ENCODE measurements at regions of chr19 and their contacts with region 1.

Region 1: GRCh38 chr19:45643024-45643926 is 4.1 kb upstream of the EML2 start:
- DNase-seq: peak; percentile 97
- ATAC-seq: peak; percentile 41
- H3K4me3 Mint-ChIP-seq: peak overlapping the region; percentile 92
- H3K27ac Mint-ChIP-seq: peak overlapping the region; percentile 99
- H3K4me1 Mint-ChIP-seq: peaks cover 49% of the 10 kb centered on the region
- H3K27me3 Mint-ChIP-seq: peaks cover 3% of the 10 kb centered on the region
- CTCF ChIP-seq: peak; percentile 99

Region 2: GRCh38 chr19:45485305-45486077 is 157.8 kb before region 1 on chr19:
- CTCF ChIA-PET with region 1: interaction called, 19 read pairs
- POLR2A ChIA-PET with region 1: no interaction called
- intact Hi-C with region 1: no loop called
- DNase-seq: peak; percentile 100
- ATAC-seq: peak; percentile 99
- H3K4me3 Mint-ChIP-seq: peak overlapping the region; percentile 86
- H3K27ac Mint-ChIP-seq: peak overlapping the region; percentile 85
- H3K4me1 Mint-ChIP-seq: peaks cover 14% of the 10 kb centered on the region
- H3K27me3 Mint-ChIP-seq: peaks cover 2% of the 10 kb centered on the region
- CTCF ChIP-seq: peak; percentile 92

Region 3: GRCh38 chr19:45584332-45585157 is 58.7 kb before region 1 on chr19 and contains the start of gene OPA3:
- CTCF ChIA-PET with region 1: interaction called, 3 read pairs
- POLR2A ChIA-PET with region 1: interaction called, 21 read pairs
- intact Hi-C with region 1: no loop called
- DNase-seq: peak; percentile 100
- ATAC-seq: peak; percentile 93
- H3K4me3 Mint-ChIP-seq: peak within 1 kb of the TSS; percentile 91
- H3K27ac Mint-ChIP-seq: peak within 1 kb of the TSS; percentile 99
- H3K4me1 Mint-ChIP-seq: peaks cover 17% of the 10 kb centered on the region
- H3K27me3 Mint-ChIP-seq: peaks cover 8% of the 10 kb centered on the region
- CTCF ChIP-seq: no peak
- total RNA-seq, gene OPA3: 13.7 to 14.3 TPM

Region 4: DNA sequence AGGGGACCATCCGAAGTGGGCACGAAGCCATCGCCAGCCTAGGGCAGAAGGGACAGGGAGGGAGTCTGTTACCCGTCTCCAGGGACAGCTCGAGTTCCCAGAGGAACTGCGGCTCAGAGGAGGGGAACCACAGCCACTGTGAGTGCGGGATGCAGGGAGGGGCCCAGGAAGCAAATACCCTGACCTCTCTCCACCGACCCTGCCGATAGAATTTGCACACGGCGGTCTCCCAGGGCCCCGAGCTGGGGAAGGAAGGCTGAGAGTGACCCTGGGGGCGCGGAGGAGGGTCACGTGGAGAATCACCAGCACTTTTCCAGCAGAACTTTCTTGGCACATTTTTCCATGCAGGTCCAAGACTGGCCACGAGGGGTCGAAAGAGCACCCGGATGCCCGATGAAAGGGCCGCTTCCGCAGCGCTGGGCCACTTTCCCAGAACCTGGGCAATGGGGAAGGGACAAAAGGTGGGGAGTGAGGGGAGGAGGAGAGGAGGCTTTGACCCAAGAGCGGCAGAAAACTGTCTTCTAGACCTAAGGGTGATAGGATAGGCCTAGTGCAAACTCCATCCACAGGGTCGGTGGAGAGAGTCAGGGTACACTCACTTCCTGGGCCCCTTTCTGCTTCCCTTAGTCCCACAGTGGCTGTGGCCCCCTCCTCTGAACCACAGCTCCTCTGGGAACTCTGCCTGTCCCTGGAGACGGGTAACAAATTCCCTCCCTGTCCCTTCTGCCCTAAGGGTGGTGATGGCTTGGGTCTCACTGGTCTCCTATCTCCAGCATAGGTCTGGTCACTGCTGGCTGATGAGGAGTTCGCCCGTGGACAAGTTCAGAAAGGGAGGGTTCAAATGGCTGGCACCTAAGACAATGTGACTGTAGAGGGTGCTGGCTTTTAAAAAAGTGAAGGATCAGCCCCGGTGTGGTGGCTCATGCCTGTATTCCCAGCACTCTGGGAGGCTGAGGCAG is 35.9 kb before region 1 on chr19:
- CTCF ChIA-PET with region 1: interaction called, 22 read pairs
- POLR2A ChIA-PET with region 1: interaction called, 4 read pairs
- intact Hi-C with region 1: no loop called
- DNase-seq: peak; percentile 47
- ATAC-seq: peak; percentile 69
- H3K4me3 Mint-ChIP-seq: no peak overlapping the region
- H3K27ac Mint-ChIP-seq: peak overlapping the region; percentile 85
- H3K4me1 Mint-ChIP-seq: peaks cover 17% of the 10 kb centered on the region
- H3K27me3 Mint-ChIP-seq: peaks cover 9% of the 10 kb centered on the region
- CTCF ChIP-seq: peak; percentile 97

Region 5: GRCh38 chr19:45632468-45633196 is 10.6 kb before region 1 on chr19:
- CTCF ChIA-PET with region 1: interaction called, 29 read pairs
- POLR2A ChIA-PET with region 1: interaction called, 25 read pairs
- intact Hi-C with region 1: no loop called
- DNase-seq: peak; percentile 60
- ATAC-seq: peak; percentile 52
- H3K4me3 Mint-ChIP-seq: no peak overlapping the region
- H3K27ac Mint-ChIP-seq: peak overlapping the region; percentile 61
- H3K4me1 Mint-ChIP-seq: peaks cover 17% of the 10 kb centered on the region
- H3K27me3 Mint-ChIP-seq: no peaks in the 10 kb centered on the region
- CTCF ChIP-seq: no peak

Region 6: GRCh38 chr19:45692187-45693105 is 49.2 kb after region 1 on chr19 and contains the start of gene QPCTL:
- CTCF ChIA-PET with region 1: interaction called, 10 read pairs
- POLR2A ChIA-PET with region 1: interaction called, 20 read pairs
- intact Hi-C with region 1: no loop called
- DNase-seq: peak; percentile 99
- ATAC-seq: peak; percentile 91
- H3K4me3 Mint-ChIP-seq: peak within 1 kb of the TSS; percentile 99
- H3K27ac Mint-ChIP-seq: peak within 1 kb of the TSS; percentile 100
- H3K4me1 Mint-ChIP-seq: peaks cover 27% of the 10 kb centered on the region
- H3K27me3 Mint-ChIP-seq: no peaks in the 10 kb centered on the region
- CTCF ChIP-seq: no peak
- total RNA-seq, gene QPCTL: 31.6 to 31.7 TPM